Cardiac septum (tissue), 1 donor: ENCODE measurements at regions of chr2 and their contacts with region 1.

Region 1: GRCh38 chr2:6917071-6917760 is at the start of gene RNF144A:
- DNase-seq: peak; percentile 83
- total RNA-seq, gene RNF144A: 11.7 TPM

Region 2: DNA sequence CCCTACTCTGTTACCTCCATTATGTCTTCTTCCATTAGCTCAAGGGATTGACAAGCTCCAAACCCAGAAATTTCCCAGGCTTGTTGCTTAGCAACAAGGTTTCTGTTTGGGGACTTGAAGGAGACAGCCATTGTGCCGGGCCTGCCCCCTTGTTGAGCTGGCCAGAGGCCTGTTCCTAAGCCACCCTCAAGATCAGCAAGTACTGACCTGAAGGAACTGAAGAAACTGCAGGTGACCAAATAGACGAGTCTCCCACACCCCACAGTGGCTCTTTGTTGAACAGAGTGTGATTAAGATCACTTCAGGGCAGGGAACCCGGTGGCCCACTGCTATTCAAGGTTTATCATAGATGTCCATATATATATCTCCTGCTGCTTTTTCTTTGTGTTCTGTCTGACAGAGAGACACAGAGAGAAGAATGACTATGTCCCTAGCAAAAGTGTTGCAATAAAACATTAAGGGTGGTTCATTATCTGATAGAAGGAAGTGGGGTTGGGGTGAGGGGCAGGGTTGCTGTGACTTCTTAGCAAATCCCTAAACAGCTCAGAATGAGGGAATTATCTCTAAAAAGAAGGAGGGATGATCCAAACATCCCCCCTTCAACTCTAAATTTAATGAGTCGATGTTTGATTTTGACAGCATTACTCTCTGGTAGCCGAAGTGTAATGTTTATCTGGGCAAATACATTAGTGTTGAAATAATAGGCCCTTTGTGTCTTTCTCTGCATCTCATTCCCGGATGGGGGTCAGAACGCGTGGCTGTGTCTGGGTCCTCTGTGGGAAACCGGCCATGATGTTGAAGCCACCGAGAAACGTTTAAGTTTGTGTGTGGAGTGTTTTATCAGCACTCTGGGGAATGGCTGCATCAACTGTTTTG is 69.3 kb after region 1 on chr2:
- intact Hi-C with region 1: loop called (anchors 2 kb)
- DNase-seq: no peak

Region 3: GRCh38 chr2:7007846-7008741 is 90.9 kb after region 1 on chr2:
- intact Hi-C with region 1: loop called (anchors 5 kb)
- DNase-seq: peak; percentile 96

Region 4: DNA sequence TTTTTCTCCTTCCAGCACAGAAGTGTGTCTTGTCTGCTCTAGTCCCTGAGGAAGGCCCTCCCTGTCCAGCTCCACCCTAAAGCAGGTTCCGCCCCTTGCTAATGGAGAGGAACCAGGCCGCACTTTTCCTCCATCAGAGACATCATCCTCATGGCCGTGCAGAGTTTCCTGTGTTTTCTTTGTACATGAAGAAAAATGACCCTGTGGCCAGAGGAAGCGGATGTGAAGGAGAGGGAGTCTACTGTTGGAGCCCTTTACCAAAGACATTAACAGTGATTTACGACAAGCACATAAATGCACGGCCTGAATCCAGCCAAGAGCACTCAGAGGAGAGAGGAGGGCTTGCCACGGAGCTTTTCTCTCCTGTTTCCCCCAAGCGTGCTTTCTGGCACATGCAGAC is 109.5 kb after region 1 on chr2:
- intact Hi-C with region 1: loop called (anchors 5 kb)
- DNase-seq: no peak